CD4-positive, alpha-beta T cell (primary cell): ENCODE measurements at regions of chr3 and their contacts with region 1.

Region 1: DNA sequence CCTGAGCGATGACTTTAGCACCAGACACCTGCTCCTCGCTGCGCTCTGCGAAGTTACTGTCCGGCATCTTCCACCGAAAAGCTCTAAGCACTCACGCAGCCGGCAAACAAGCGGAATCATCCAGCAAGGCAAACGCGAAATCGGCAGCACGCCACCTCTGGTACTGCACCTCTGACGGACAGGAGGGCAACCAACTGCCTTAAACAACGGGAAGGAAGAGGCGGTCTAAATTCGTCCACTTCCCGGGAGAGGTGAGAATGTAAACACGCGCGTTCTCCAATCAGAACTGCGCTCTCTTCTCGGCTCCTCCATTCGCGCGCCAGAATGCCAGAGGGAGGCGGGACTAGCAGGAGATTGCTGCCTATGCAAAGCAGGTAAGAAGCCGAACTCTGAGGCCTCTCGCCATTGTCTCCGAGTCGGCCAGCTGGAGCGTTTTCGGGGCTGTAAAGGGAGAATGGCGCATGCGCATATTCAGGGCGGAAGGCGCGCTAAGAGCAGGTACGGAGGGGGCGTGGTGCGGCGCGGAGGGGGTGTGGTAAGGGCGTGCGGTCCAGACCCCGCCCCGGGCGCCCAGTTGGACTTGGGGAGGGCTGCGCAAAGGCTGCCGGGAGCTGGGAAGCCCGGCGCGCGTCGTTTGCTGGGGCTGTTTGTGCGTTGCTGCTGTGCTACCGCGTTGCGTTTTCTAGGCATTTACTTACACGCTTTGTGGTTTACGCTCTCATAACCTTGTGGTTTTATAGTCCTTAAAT is at the starts of genes BTD and HACL1:
- DNase-seq: peak; percentile 97 to 100 (median 98)
- ATAC-seq: peak; percentile 90
- H3K4me3 ChIP-seq: peak within 1 kb of the TSS; percentile 83
- H3K4me3 Mint-ChIP-seq: peak within 1 kb of the TSS; percentile 95
- H3K27ac ChIP-seq: peak within 1 kb of the TSS; percentile 75 to 81
- H3K27ac Mint-ChIP-seq: peak within 1 kb of the TSS; percentile 91
- H3K4me1 ChIP-seq: peaks cover 28% of the 10 kb centered on the region
- H3K4me1 Mint-ChIP-seq: peaks cover 65% of the 10 kb centered on the region
- H3K27me3 ChIP-seq: no peaks in the 10 kb centered on the region
- H3K27me3 Mint-ChIP-seq: no peaks in the 10 kb centered on the region
- CTCF ChIP-seq: peak; percentile 21
- total RNA-seq, gene BTD: 11.2 to 12.5 TPM
- total RNA-seq, gene HACL1: 26.6 to 33.2 TPM

Region 2: GRCh38 chr3:14640157-14640562 is 961.4 kb before region 1 on chr3:
- CTCF ChIA-PET with region 1: no interaction called
- POLR2A ChIA-PET with region 1: no interaction called
- intact Hi-C with region 1: loop called in 1 of 2 experiments (anchors 10 kb)
- DNase-seq: no peak
- ATAC-seq: no peak
- H3K4me3 ChIP-seq: no peak overlapping the region
- H3K4me3 Mint-ChIP-seq: no peak overlapping the region
- H3K27ac ChIP-seq: no peak overlapping the region
- H3K27ac Mint-ChIP-seq: no peak overlapping the region
- H3K4me1 ChIP-seq: no peaks in the 10 kb centered on the region
- H3K4me1 Mint-ChIP-seq: peaks cover under 1% of the 10 kb centered on the region
- H3K27me3 ChIP-seq: peaks cover 14 to 31% of the 10 kb centered on the region in 2 experiments
- H3K27me3 Mint-ChIP-seq: peaks cover 61% of the 10 kb centered on the region
- CTCF ChIP-seq: no peak

Region 3: DNA sequence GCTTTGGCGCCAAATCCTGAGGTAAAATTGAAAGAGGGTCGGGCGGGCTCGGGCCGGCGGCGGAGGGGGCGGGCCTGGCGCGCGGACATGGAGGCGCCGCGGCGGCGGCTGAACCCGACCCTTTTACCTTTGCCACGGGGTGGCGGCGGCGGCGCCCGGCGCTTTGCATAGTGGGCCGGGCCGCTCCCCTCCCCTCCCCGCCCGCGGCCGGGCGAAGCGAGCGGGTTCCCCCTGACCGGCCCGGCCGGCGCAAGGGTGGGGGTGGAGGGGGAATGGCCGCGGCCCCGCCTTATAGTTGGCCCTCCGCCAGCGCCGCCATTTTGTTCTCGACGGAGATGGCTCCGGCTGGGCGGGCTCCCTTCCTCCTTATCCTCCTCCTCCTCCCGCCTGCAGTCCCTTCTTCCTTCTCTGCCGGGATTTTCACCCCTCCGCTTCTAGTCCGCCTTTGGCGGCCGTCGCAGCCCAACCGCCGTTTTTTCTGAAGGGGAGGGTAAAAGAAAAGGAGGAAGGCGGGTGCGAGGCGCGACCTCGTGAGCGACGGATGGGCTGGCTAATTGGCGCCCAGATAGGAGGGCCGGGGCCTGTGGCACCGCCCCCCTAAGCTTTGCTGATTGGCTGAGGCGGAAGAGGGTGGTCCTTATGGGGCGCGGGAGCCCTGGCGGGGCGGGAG is 653.5 kb before region 1 on chr3:
- CTCF ChIA-PET with region 1: no interaction called
- POLR2A ChIA-PET with region 1: no interaction called
- intact Hi-C with region 1: loop called in 1 of 2 experiments (anchors 10 kb)
- DNase-seq: peak; percentile 93 to 97 (median 95)
- ATAC-seq: peak; percentile 90
- H3K4me3 ChIP-seq: peak overlapping the region; percentile 96
- H3K4me3 Mint-ChIP-seq: peak overlapping the region; percentile 98
- H3K27ac ChIP-seq: peak overlapping the region; percentile 98 to 99
- H3K27ac Mint-ChIP-seq: peak overlapping the region; percentile 98
- H3K4me1 ChIP-seq: peaks cover 30% of the 10 kb centered on the region
- H3K4me1 Mint-ChIP-seq: peaks cover 66% of the 10 kb centered on the region
- H3K27me3 ChIP-seq: no peaks in the 10 kb centered on the region
- H3K27me3 Mint-ChIP-seq: no peaks in the 10 kb centered on the region
- CTCF ChIP-seq: no peak

Region 4: GRCh38 chr3:15612001-15612400 is 10.4 kb after region 1 on chr3:
- CTCF ChIA-PET with region 1: no interaction called
- POLR2A ChIA-PET with region 1: interaction called, 15 read pairs
- intact Hi-C with region 1: no loop called
- DNase-seq: no peak
- ATAC-seq: no peak
- H3K4me3 ChIP-seq: no peak overlapping the region
- H3K4me3 Mint-ChIP-seq: no peak overlapping the region
- H3K27ac ChIP-seq: no peak overlapping the region
- H3K27ac Mint-ChIP-seq: no peak overlapping the region
- H3K4me1 ChIP-seq: no peaks in the 10 kb centered on the region
- H3K4me1 Mint-ChIP-seq: peaks cover 14% of the 10 kb centered on the region
- H3K27me3 ChIP-seq: no peaks in the 10 kb centered on the region
- H3K27me3 Mint-ChIP-seq: no peaks in the 10 kb centered on the region
- CTCF ChIP-seq: no peak

Region 5: DNA sequence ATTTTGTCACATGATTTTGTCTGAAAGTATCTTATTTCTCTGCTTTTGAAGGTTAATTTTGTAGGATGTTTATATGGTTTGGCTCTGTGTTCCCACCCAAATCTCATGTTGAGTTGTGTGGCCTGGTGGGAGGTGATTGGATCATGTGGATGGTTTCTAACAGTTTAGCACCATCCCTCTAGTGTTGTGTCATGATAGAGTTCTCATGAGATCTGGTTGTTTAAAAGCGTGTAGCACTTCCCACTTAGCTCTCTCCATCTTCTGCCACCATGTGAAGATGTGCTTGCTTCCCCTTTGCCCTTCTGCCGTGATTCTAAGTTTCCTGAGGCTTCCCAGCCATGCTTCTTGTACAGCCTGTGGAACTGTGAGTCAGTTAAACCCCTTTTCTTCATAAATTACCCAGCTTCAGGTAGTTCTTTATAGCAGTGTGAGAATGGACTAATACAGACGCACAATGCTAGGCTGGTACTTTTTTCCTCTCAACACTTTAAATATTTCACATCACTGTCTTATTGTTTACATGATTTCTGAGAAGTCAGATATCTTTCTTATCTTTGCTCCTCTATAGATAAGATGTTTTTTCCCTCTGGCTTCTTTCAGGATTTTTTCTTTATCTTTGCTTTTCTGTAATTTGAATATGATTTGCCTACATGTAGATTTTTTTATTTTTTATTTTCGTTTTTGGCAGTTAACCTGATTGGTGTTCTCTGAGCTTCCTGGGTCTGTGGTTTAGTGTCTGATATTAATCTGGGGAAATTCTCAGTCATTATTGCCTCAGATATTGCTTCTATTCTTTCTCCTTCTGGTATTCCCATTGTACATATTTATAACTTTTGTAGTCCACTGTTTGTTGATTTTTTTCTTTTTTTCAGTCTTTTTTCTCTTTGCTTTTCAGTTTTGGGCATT is 22.2 kb after region 1 on chr3:
- CTCF ChIA-PET with region 1: no interaction called
- POLR2A ChIA-PET with region 1: interaction called, 19 read pairs
- intact Hi-C with region 1: no loop called
- DNase-seq: peak in 3 of 14 experiments; percentile 62 to 75 (median 67)
- ATAC-seq: peak; percentile 88
- H3K4me3 ChIP-seq: peak overlapping the region; percentile 47
- H3K4me3 Mint-ChIP-seq: peak overlapping the region; percentile 81
- H3K27ac ChIP-seq: peak overlapping the region; percentile 16 to 79
- H3K27ac Mint-ChIP-seq: peak overlapping the region; percentile 80
- H3K4me1 ChIP-seq: peaks cover 15% of the 10 kb centered on the region
- H3K4me1 Mint-ChIP-seq: peaks cover 29% of the 10 kb centered on the region
- H3K27me3 ChIP-seq: no peaks in the 10 kb centered on the region
- H3K27me3 Mint-ChIP-seq: no peaks in the 10 kb centered on the region
- CTCF ChIP-seq: no peak

Region 6: DNA sequence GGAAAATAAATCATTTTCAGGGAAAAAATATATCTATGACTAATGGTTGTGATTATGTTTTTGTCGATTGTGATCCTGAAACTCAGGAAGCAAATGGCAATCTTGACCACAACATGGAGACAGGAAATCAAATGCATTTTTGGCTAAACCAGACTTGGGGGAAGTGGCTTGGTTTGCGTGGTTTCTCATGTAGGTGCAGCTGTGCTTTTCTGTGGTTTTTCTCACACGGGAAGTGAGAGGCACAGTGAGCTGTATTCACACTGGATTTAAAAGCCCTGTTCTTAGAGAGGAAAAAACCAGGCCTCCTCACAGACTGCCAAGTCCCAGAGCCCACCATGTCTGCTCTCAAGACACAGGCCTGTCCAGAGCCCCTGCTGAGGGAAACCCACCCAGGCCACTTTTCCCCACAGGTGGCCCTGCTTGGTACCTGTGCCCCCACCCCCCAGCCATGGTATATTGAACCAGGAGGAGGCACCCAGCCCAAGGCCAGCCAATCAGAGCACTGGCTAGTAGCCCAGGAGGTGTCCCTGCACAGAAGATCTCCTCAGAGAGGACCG is 46.1 kb after region 1 on chr3:
- CTCF ChIA-PET with region 1: no interaction called
- POLR2A ChIA-PET with region 1: interaction called, 5 read pairs
- intact Hi-C with region 1: loop called in 1 of 2 experiments (anchors 1 kb)
- DNase-seq: peak in 13 of 14 experiments; percentile 24 to 82 (median 40)
- ATAC-seq: peak; percentile 93
- H3K4me3 ChIP-seq: peak overlapping the region; percentile 11
- H3K4me3 Mint-ChIP-seq: peak overlapping the region; percentile 74
- H3K27ac ChIP-seq: no peak overlapping the region
- H3K27ac Mint-ChIP-seq: peak overlapping the region; percentile 50
- H3K4me1 ChIP-seq: peaks cover 49% of the 10 kb centered on the region
- H3K4me1 Mint-ChIP-seq: peaks cover 56% of the 10 kb centered on the region
- H3K27me3 ChIP-seq: no peaks in the 10 kb centered on the region
- H3K27me3 Mint-ChIP-seq: no peaks in the 10 kb centered on the region
- CTCF ChIP-seq: no peak

Region 7: DNA sequence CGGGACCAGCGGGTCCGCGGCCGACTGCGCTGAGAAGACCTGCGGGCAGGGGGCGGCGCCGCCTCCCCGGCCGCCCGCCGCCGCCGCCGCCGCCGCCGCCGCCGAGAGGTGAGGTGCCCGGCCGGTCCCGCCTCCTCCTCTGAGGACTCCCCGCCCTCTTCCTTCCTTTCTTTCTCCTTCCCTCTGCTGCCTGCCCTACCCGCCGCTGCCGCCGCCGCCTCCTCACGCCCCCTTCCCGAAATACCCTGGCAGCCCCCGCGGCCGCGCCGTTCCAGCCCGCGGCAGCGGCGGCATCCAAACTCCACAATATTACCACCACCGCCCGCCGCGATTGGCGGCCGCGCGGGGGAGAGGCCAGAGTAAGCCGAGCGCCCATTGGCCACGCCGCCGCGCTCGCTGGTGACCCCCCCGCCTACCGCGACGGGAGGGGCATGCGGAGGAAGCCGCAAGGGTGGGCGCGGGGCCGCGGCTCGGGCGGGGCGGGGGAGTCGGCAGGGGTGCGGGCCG is 258.0 kb after region 1 on chr3:
- CTCF ChIA-PET with region 1: no interaction called
- POLR2A ChIA-PET with region 1: no interaction called
- intact Hi-C with region 1: loop called in 1 of 2 experiments (anchors 1 kb)
- DNase-seq: peak; percentile 45 to 89 (median 63)
- ATAC-seq: peak; percentile 77
- H3K4me3 ChIP-seq: peak overlapping the region; percentile 74
- H3K4me3 Mint-ChIP-seq: peak overlapping the region; percentile 100
- H3K27ac ChIP-seq: no peak overlapping the region
- H3K27ac Mint-ChIP-seq: peak overlapping the region; percentile 93
- H3K4me1 ChIP-seq: peaks cover 15% of the 10 kb centered on the region
- H3K4me1 Mint-ChIP-seq: peaks cover 41% of the 10 kb centered on the region
- H3K27me3 ChIP-seq: no peaks in the 10 kb centered on the region
- H3K27me3 Mint-ChIP-seq: no peaks in the 10 kb centered on the region
- CTCF ChIP-seq: no peak